BJ (cell line): ENCODE measurements at regions of chr2 and their contacts with region 1.

Region 1: DNA sequence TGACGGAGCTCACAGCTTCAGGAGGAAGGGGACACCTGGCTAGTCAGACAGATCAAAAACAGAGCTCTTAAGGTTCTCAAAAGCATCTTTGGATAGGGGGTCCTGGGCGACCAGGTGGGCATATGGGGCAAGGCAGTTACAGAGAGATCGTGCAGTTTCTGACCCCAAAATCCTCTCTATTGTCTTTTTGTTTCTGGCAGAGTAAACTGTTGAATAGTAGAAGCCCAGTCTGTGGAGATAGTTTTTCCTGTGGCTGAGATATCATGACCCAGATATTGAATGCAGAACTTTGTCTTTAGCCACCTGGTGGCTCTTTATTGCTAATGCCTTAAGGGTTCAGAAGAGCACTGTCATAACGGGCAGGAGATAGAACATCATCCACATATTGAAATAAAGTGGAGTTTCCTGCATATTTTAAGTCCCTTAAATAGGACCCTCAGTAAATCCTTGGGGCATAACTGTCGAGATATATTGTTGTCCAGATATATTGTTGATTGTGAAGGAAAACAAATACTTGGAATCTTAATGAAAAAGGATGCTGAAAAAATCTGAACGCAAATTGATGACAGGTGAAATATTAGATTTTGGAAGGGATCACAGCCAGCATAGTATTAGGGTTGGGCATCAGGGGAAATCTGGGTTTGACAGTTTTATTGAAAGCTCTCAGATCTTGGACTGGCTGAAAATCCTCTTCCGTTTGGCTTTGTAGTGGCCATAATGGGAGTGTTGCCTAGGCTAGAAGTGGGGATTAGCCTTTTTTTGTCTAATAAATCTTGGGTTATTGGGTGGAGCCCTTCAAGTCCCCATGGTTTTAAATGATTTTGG is 14.1 kb upstream of the ZDBF2 start:
- DNase-seq: no peak
- H3K4me3 ChIP-seq: no peak overlapping the region
- H3K27me3 ChIP-seq: peaks cover 27% of the 10 kb centered on the region
- CTCF ChIP-seq: peak; percentile 58

Region 2: DNA sequence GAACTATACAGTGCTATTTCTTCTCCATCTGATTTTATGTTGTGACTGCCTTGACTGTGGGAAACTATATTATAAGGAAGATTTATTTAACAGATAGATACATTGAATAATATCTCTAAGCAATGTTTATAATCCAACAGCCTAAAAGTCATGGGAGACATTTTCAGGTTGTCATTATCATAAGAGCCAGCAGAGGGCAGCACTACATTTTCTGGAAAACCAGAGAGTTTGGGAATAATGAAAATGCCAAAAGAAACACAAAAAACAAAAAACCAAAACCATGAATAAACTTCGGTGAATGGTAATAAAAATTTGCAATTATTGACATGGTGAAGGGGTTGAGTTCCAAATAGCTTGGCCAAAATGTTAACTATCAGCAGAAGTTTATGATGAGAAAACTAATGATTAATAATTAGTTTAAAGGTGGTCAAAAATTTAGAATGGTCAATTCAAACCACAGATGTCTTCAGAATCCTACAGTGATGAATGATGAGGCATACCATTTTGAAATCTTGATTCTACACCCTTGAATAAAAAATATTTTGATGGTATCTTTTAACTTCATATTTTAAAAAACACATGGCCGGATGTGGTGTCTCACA is 96.0 kb before region 1 on chr2:
- CTCF ChIA-PET with region 1: interaction called, 10 read pairs
- POLR2A ChIA-PET with region 1: interaction called, 6 read pairs
- DNase-seq: no peak
- H3K4me3 ChIP-seq: no peak overlapping the region
- H3K27me3 ChIP-seq: no peaks in the 10 kb centered on the region
- CTCF ChIP-seq: peak; percentile 65

Region 3: DNA sequence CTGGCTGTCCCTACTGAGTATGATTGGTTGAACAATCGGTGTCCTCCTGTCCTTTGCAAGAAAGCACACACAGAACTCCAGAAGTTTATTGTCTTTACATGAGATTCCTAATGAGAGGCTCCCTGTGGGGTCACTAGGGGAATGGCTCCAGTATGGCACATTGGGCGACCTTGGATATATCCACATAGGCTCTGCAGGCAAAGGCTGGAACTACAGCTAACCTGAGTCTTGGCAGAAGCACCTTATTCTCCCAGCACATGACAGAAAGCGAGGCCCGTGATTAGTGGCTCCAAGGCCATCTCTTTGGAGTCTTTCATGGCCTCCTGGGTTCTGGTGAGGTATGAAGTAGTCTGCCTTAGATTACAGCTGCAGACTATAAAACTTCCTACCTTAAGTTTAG is 63.1 kb after region 1 on chr2:
- CTCF ChIA-PET with region 1: no interaction called
- POLR2A ChIA-PET with region 1: no interaction called
- DNase-seq: no peak
- H3K4me3 ChIP-seq: no peak overlapping the region
- H3K27me3 ChIP-seq: no peaks in the 10 kb centered on the region
- CTCF ChIP-seq: no peak

Region 4: DNA sequence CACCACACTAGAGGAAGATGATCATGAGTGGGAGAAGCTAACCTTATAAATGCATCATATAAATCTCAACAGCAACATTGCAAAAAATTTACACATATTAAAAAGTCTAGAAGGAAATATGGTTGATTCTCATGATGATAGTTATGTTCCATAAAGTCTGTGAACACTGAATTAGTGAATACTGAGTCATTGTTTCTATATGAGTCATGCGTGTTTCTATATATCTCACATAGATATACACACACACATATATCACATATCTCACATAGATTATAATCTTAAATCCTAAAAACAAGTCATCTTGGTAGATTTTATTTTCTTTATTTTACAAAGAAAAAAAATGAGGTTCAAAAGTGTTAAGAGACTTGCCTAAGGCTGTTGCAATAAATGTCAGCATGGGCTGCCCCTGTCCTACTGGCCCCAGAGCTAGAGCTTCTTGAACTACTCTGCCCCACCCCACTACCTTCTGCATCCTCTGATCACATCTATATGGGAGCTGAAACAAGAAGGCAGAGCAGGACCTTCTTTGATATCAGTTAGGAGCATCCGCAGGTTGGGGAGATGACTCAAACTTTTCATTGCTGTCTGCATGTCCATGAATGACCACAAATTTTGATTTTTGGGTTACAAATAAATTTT is 101.1 kb after region 1 on chr2:
- CTCF ChIA-PET with region 1: no interaction called
- POLR2A ChIA-PET with region 1: no interaction called
- DNase-seq: no peak
- H3K4me3 ChIP-seq: no peak overlapping the region
- H3K27me3 ChIP-seq: no peaks in the 10 kb centered on the region
- CTCF ChIP-seq: no peak

Region 5: GRCh38 chr2:206408323-206409320 is 148.2 kb after region 1 on chr2:
- CTCF ChIA-PET with region 1: no interaction called
- POLR2A ChIA-PET with region 1: no interaction called
- DNase-seq: no peak
- H3K4me3 ChIP-seq: no peak overlapping the region
- H3K27me3 ChIP-seq: no peaks in the 10 kb centered on the region
- CTCF ChIP-seq: no peak